Activated naive CD4-positive, alpha-beta T cell treated with anti-CD3 and anti-CD28 coated beads, Interleukin-2, amount 10 ng/mL, durations not matched to agents 7 days and 5 days (primary cell): ENCODE measurements at regions of chr1 and their contacts with region 1.

Region 1: GRCh38 chr1:10430216-10431069 is at the start of gene CENPS:
- DNase-seq: peak; percentile 84
- H3K4me3 Mint-ChIP-seq: peak within 1 kb of the TSS; percentile 72
- H3K27ac Mint-ChIP-seq: peak within 1 kb of the TSS; percentile 88
- H3K4me1 Mint-ChIP-seq: peaks cover 33% of the 10 kb centered on the region
- H3K27me3 Mint-ChIP-seq: no peaks in the 10 kb centered on the region

Region 2: GRCh38 chr1:10378081-10378841 is 52.2 kb before region 1 on chr1:
- CTCF ChIA-PET with region 1: interaction called, 14 read pairs
- DNase-seq: no peak
- H3K4me3 Mint-ChIP-seq: no peak overlapping the region
- H3K27ac Mint-ChIP-seq: no peak overlapping the region
- H3K4me1 Mint-ChIP-seq: no peaks in the 10 kb centered on the region
- H3K27me3 Mint-ChIP-seq: no peaks in the 10 kb centered on the region

Region 3: DNA sequence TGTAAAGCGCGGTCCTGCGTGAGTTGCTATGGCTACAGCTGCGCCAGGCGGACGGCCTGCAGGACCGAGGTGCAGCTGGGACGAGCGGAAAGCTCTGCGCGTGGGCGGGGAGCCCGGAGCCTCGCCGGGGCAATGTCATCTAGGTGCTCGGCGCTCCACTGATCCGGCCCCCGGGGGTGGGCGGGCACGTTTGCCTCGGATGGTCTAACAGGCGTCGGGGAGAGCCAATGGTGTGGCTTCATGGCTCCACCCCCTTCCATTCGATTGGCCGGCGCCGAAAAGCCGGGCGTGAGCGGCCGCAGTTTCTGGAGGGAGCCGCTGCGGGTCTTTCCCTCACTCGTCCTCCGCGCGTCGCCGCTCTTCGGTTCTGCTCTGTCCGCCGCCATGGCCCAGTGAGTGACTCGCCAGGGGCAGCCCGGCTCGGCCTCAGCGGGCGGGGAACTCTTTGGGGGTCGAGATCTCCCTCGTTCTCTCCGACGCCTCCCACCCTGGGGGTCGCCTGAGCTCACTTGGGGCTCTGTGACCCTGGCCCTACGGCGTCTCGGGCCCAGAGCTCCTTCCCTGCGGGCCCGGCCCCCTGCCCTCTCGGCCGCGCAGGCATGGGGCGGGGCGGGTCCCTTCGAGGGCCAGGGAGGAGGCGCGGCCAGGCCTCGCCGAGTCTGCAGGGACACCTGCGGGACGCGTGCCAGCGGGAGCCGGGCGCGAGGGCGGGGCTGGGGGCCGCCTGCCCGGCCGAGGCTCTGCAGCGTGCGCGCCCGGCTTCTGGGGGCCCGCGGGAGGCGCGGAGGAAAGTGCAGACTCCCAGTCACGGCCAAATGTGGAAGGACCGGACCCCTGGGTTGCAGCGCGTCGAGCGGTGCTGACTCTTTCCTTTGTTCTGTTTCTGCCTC is 31.5 kb before region 1 on chr1 and contains the start of gene PGD:
- CTCF ChIA-PET with region 1: interaction called, 11 read pairs
- DNase-seq: peak; percentile 99
- H3K4me3 Mint-ChIP-seq: peak within 1 kb of the TSS; percentile 88
- H3K27ac Mint-ChIP-seq: peak within 1 kb of the TSS; percentile 83
- H3K4me1 Mint-ChIP-seq: peaks cover 39% of the 10 kb centered on the region
- H3K27me3 Mint-ChIP-seq: peaks cover 5% of the 10 kb centered on the region

Region 4: GRCh38 chr1:10555614-10556429 is 125.4 kb after region 1 on chr1:
- CTCF ChIA-PET with region 1: no interaction called
- DNase-seq: no peak
- H3K4me3 Mint-ChIP-seq: no peak overlapping the region
- H3K27ac Mint-ChIP-seq: no peak overlapping the region
- H3K4me1 Mint-ChIP-seq: no peaks in the 10 kb centered on the region
- H3K27me3 Mint-ChIP-seq: no peaks in the 10 kb centered on the region